ENCODE measurements at regions of chr18 and their contacts with region 1.

Region 1: DNA sequence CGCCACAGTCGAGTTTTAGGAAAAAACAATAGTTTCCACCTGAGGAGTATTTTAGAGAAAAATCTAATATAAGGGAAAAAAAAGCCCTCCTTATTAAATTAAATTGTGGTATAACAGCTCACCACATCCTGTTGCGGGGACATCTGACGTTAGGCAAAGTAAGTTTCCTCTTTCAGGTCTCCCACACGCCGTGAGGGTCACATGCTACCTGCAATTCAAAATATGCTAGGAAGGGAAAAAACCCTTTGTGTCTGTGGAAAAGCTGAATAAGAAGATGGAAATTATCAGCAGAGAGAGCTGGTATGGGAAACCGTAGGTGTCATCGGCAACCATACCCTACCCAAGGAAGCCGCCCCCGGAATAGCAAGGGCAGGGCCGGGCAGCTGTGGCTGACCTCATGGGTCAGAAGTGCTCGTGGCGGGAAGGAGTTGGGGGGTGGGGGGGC is 128.0 kb downstream of the NFATC1 start:
- DNase-seq: peak; percentile 15 to 91 (median 88)
- ATAC-seq: peak; percentile 79
- H3K4me3 ChIP-seq: peak overlapping the region; percentile 56
- H3K4me3 Mint-ChIP-seq: peak overlapping the region; percentile 83 to 93 (median 90)
- H3K27ac ChIP-seq: peak overlapping the region; percentile 93
- H3K27ac Mint-ChIP-seq: peak overlapping the region; percentile 88 to 100 (median 98)
- H3K4me1 ChIP-seq: peaks cover 35 to 67% of the 10 kb centered on the region in 2 donors
- H3K4me1 Mint-ChIP-seq: peaks cover 48 to 94% (median 75%) of the 10 kb centered on the region in 7 donors
- H3K27me3 ChIP-seq: no peaks in the 10 kb centered on the region
- H3K27me3 Mint-ChIP-seq: no peaks in the 10 kb centered on the region

Region 2: GRCh38 chr18:79068937-79069791 is 454.6 kb before region 1 on chr18 and contains the start of gene ATP9B:
- CTCF ChIA-PET with region 1: interaction called, 3 read pairs
- POLR2A ChIA-PET with region 1: no interaction called
- intact Hi-C with region 1: loop called (anchors 2 kb)
- DNase-seq: peak; percentile 97 to 100 (median 99)
- ATAC-seq: peak; percentile 91
- H3K4me3 ChIP-seq: peak within 1 kb of the TSS; percentile 59
- H3K4me3 Mint-ChIP-seq: peak within 1 kb of the TSS; percentile 85 to 98 (median 94)
- H3K27ac ChIP-seq: peak within 1 kb of the TSS; percentile 98
- H3K27ac Mint-ChIP-seq: peak within 1 kb of the TSS; percentile 98 to 100 (median 99)
- H3K4me1 ChIP-seq: peaks cover 12 to 29% of the 10 kb centered on the region in 2 donors
- H3K4me1 Mint-ChIP-seq: peaks cover 28 to 63% (median 51%) of the 10 kb centered on the region in 7 donors
- H3K27me3 ChIP-seq: no peaks in the 10 kb centered on the region
- H3K27me3 Mint-ChIP-seq: peaks cover under 1 to 21% (median 5%) of the 10 kb centered on the region in 5 donors
- total RNA-seq, gene ATP9B: 36.1 to 90.5 (median 90.0) TPM

Region 3: DNA sequence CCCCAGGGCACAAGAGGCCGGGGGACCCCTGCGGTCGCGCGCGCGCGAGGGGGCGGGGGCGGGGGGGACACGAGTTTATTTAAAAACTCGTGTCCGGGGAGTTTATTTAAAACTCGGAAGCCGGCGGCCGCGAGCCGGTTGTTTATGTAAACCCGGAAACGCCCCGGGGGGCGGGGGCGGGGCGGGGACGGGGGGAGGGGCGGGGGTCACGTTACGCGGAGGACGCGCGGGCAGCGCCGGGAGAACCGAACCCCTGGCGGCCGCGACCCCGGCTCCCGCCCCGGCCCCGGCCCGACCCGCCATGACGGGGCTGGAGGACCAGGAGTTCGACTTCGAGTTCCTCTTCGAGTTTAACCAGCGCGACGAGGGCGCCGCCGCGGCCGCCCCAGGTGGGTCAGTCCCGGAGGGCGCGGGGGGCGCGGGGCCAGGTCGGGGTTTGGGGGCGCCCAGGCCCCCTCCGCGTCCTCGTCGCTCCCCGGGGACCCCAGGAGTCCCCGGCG is 123.6 kb before region 1 on chr18:
- CTCF ChIA-PET with region 1: interaction called, 10 read pairs
- POLR2A ChIA-PET with region 1: interaction called, 62 read pairs
- intact Hi-C with region 1: loop called (anchors 1 kb)
- DNase-seq: peak in 8 of 9 donors; percentile 38 to 65 (median 52)
- ATAC-seq: peak; percentile 45
- H3K4me3 ChIP-seq: peak overlapping the region; percentile 52
- H3K4me3 Mint-ChIP-seq: peak overlapping the region in 2 of 10 donors; percentile 90 to 91
- H3K27ac ChIP-seq: peak overlapping the region; percentile 95
- H3K27ac Mint-ChIP-seq: no peak overlapping the region
- H3K4me1 ChIP-seq: peaks cover 22 to 43% of the 10 kb centered on the region in 2 donors
- H3K4me1 Mint-ChIP-seq: peaks cover 31 to 64% (median 52%) of the 10 kb centered on the region in 7 donors
- H3K27me3 ChIP-seq: no peaks in the 10 kb centered on the region
- H3K27me3 Mint-ChIP-seq: no peaks in the 10 kb centered on the region

Region 4: DNA sequence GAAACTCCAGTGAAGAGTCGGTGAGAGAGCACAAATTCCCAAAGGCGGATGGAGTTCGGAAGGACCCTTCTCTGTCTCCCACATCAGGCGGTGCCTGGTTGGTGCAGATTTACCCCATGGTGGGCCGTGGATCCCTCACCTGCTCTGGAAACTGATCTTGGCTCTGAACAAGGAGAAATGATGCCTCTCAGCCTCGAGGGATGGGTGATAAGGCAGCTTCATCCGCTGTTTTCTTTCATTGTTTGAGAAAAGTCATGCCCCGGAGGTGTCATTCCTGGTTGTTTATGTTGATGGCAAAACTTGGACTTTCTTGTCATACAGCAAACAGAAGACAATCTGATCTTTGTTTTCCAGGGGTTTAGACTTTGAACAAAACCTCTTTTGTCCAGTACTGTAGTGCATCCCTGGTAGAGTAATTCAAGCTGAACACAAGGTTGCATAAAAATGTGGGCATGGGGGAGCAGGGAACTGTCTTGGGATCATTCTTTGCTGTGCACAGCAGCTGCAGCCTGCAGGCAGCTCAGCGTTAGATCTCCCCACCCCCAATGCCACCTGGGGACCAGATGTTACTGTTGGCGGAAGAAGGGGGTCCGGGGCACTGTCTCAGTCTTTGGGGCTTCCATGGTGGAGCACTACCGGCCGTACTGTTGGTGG is 46.7 kb before region 1 on chr18:
- CTCF ChIA-PET with region 1: no interaction called
- POLR2A ChIA-PET with region 1: interaction called, 6 read pairs
- intact Hi-C with region 1: loop called in 1 of 2 experiments (anchors 5 kb)
- DNase-seq: no peak
- ATAC-seq: no peak
- H3K4me3 ChIP-seq: no peak overlapping the region
- H3K4me3 Mint-ChIP-seq: no peak overlapping the region
- H3K27ac ChIP-seq: peak overlapping the region; percentile 0
- H3K27ac Mint-ChIP-seq: peak overlapping the region in 8 of 9 donors; percentile 45 to 87 (median 76)
- H3K4me1 ChIP-seq: peaks cover 0 to 11% of the 10 kb centered on the region in 2 donors
- H3K4me1 Mint-ChIP-seq: peaks cover 2 to 23% (median 13%) of the 10 kb centered on the region in 7 donors
- H3K27me3 ChIP-seq: no peaks in the 10 kb centered on the region
- H3K27me3 Mint-ChIP-seq: no peaks in the 10 kb centered on the region

Region 5: GRCh38 chr18:79679111-79679872 is 155.5 kb after region 1 on chr18 and contains the start of gene CTDP1:
- CTCF ChIA-PET with region 1: no interaction called
- POLR2A ChIA-PET with region 1: interaction called, 8 read pairs
- intact Hi-C with region 1: loop called (anchors 1 kb)
- DNase-seq: peak; percentile 94 to 99 (median 99)
- ATAC-seq: peak; percentile 91
- H3K4me3 ChIP-seq: peak within 1 kb of the TSS; percentile 94
- H3K4me3 Mint-ChIP-seq: peak within 1 kb of the TSS; percentile 85 to 99 (median 98)
- H3K27ac ChIP-seq: peak within 1 kb of the TSS; percentile 96
- H3K27ac Mint-ChIP-seq: peak within 1 kb of the TSS; percentile 92 to 100 (median 99)
- H3K4me1 ChIP-seq: peaks cover 34 to 55% of the 10 kb centered on the region in 2 donors
- H3K4me1 Mint-ChIP-seq: peaks cover 33 to 68% (median 63%) of the 10 kb centered on the region in 7 donors
- H3K27me3 ChIP-seq: no peaks in the 10 kb centered on the region
- H3K27me3 Mint-ChIP-seq: peaks cover 0 to 3% (median 0%) of the 10 kb centered on the region in 5 donors
- total RNA-seq, gene CTDP1: 38.8 to 75.3 (median 41.2) TPM

Region 6: DNA sequence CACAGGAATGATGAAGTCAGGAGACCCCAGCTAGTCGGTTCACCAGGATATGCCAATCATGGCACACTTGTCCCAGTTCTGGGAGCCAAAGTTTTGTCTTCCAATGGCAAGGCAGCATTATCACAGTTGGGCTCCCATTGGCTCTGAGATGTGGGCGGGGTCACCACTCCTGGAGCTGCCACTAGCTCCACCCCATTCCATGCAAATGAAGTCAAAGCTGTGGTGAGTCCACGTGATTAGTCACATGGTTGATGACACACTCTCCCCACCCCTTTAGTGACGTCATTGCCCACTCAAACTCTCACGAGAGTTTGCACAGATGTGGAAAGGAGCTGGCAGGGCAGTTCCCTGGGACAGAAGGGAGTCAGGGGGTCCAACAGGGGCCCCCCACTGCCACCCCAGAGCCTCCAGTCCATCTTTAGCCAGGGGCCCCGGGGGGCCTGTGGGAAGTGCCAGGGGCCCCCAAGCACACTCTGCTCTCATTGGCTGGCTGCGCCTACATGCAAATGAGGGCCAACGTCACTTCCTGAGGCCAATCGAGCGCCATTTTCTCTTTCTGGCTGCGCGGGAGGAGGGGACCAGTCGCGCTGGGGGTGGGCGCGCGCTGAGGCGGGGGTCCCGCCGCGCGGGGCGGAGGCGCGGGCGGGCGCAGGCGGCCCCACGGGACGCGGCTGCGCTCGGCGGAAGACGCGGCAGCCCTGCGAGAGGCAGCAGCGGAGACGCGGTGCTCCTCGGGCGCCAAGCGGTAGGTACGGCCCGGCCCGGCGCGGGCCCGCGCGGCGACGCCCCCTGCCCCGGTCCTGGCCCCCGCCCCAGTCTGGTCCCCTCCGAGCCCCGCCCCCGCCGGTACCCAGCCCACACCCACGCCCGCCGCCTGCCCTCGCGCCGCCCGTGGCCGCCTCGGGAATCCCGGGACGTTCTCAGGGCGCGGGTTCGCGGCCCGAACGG is 585.2 kb after region 1 on chr18 and contains the start of gene ADNP2:
- CTCF ChIA-PET with region 1: no interaction called
- POLR2A ChIA-PET with region 1: no interaction called
- intact Hi-C with region 1: loop called (anchors 5 kb)
- DNase-seq: peak; percentile 72 to 93 (median 89)
- ATAC-seq: peak; percentile 89
- H3K4me3 ChIP-seq: peak within 1 kb of the TSS; percentile 69
- H3K4me3 Mint-ChIP-seq: peak within 1 kb of the TSS; percentile 72 to 90 (median 86)
- H3K27ac ChIP-seq: peak within 1 kb of the TSS; percentile 85
- H3K27ac Mint-ChIP-seq: peak within 1 kb of the TSS; percentile 59 to 97 (median 93)
- H3K4me1 ChIP-seq: peaks cover 14 to 19% of the 10 kb centered on the region in 2 donors
- H3K4me1 Mint-ChIP-seq: peaks cover 23 to 58% (median 44%) of the 10 kb centered on the region in 7 donors
- H3K27me3 ChIP-seq: no peaks in the 10 kb centered on the region
- H3K27me3 Mint-ChIP-seq: peaks cover 0 to 3% (median 0%) of the 10 kb centered on the region in 5 donors
- total RNA-seq, gene ADNP2: 18.4 to 41.4 (median 25.3) TPM